ENCODE measurements at regions of chr19 and their contacts with region 1.

Region 1: GRCh38 chr19:35931161-35931873 is 4.9 kb upstream of the LRFN3 start:
- DNase-seq: peak; percentile 100
- H3K4me3 Mint-ChIP-seq: peak overlapping the region; percentile 62
- H3K27ac Mint-ChIP-seq: peak overlapping the region; percentile 91
- H3K4me1 Mint-ChIP-seq: peaks cover 40% of the 10 kb centered on the region
- H3K27me3 Mint-ChIP-seq: no peaks in the 10 kb centered on the region

Region 2: GRCh38 chr19:35710784-35711723 is 220.3 kb before region 1 on chr19:
- CTCF ChIA-PET with region 1: interaction called, 9 read pairs
- POLR2A ChIA-PET with region 1: interaction called, 13 read pairs
- DNase-seq: peak; percentile 72
- H3K4me3 Mint-ChIP-seq: peak overlapping the region; percentile 64
- H3K27ac Mint-ChIP-seq: peak overlapping the region; percentile 99
- H3K4me1 Mint-ChIP-seq: peaks cover 64% of the 10 kb centered on the region
- H3K27me3 Mint-ChIP-seq: no peaks in the 10 kb centered on the region

Region 3: GRCh38 chr19:35859414-35859813 is 71.9 kb before region 1 on chr19:
- CTCF ChIA-PET with region 1: no interaction called
- POLR2A ChIA-PET with region 1: no interaction called
- DNase-seq: no peak
- H3K4me3 Mint-ChIP-seq: no peak overlapping the region
- H3K27ac Mint-ChIP-seq: no peak overlapping the region
- H3K4me1 Mint-ChIP-seq: peaks cover 5% of the 10 kb centered on the region
- H3K27me3 Mint-ChIP-seq: peaks cover 63% of the 10 kb centered on the region

Region 4: DNA sequence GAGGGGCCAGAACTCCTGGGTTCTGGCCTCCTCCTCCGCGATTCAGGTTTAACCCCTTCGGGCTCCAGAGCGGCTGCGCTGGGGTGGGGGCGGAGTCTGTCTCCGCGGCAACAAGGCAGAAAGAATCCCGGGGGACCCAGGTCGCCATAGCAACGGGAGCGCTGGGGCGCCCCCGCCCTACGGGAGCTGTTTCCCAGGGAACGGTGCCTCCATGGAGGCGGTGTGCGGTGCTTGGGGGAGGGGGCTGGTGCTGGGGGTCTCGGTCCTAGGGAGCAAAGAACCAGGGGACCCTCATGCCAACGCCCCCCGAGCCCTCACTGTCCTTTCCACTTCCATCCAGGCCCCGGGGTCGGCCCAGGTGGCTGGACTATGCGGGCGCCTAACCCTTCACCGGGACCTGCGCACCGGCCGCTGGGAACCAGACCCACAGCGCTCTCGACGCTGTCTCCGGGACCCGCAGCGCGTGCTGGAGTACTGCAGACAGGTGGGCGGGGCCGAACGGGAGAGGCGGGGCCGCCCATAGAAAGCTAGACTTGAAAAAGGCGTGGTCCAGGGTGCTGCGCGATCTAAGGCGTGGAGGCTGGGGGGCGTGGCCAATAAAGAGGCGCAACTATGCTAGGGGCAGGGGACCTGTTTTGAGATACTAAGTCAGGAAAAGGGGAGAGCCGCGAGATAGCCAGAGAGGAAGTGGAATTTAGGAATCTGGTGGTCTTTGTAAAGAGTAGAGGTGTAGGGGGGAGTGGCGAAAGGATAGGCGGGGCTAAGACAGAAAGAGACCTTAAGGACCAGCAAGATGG is 61.8 kb before region 1 on chr19:
- CTCF ChIA-PET with region 1: interaction called, 7 read pairs
- POLR2A ChIA-PET with region 1: interaction called, 13 read pairs
- DNase-seq: peak; percentile 88
- H3K4me3 Mint-ChIP-seq: peak overlapping the region; percentile 73
- H3K27ac Mint-ChIP-seq: peak overlapping the region; percentile 43
- H3K4me1 Mint-ChIP-seq: peaks cover 18% of the 10 kb centered on the region
- H3K27me3 Mint-ChIP-seq: peaks cover 37% of the 10 kb centered on the region

Region 5: DNA sequence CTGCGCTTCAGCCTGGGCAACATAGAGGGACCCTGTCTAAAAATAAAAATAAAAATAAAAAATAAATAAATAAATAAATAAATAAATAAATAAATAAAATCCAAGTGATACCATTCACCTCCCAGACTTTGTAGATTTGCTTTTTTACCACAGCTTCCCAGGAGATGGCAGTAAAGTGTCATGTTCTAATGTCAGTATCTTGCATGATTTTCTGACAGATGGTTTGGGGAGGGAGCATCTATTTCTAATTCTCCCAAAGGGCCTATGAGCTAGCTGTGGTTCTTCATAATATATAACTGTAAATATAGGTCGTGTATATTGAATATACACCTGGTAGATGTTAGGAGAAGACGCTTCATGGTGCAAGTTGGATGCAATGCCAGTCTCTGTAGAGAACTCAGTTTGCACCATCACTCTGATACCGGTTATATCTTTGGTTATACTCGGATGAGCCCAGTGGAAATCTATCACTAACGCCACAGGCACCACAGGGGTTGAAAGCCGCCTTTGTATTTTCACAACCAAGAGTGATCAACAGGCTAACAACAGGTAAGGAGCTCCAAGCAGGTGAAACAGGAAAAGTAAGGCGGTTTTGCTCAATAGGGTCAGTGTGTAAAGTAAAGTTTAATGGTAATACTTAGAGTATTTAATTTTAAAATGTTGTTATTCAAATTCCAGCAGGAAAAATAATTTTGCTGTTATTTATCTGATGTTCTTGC is 49.0 kb before region 1 on chr19:
- CTCF ChIA-PET with region 1: interaction called, 120 read pairs
- POLR2A ChIA-PET with region 1: interaction called, 38 read pairs
- DNase-seq: peak; percentile 37
- H3K4me3 Mint-ChIP-seq: no peak overlapping the region
- H3K27ac Mint-ChIP-seq: no peak overlapping the region
- H3K4me1 Mint-ChIP-seq: peaks cover 12% of the 10 kb centered on the region
- H3K27me3 Mint-ChIP-seq: peaks cover 15% of the 10 kb centered on the region

Region 6: GRCh38 chr19:35899547-35900214 is 31.6 kb before region 1 on chr19:
- CTCF ChIA-PET with region 1: interaction called, 11 read pairs
- POLR2A ChIA-PET with region 1: interaction called, 49 read pairs
- DNase-seq: peak; percentile 90
- H3K4me3 Mint-ChIP-seq: peak overlapping the region; percentile 94
- H3K27ac Mint-ChIP-seq: peak overlapping the region; percentile 95
- H3K4me1 Mint-ChIP-seq: peaks cover 55% of the 10 kb centered on the region
- H3K27me3 Mint-ChIP-seq: no peaks in the 10 kb centered on the region

Region 7: DNA sequence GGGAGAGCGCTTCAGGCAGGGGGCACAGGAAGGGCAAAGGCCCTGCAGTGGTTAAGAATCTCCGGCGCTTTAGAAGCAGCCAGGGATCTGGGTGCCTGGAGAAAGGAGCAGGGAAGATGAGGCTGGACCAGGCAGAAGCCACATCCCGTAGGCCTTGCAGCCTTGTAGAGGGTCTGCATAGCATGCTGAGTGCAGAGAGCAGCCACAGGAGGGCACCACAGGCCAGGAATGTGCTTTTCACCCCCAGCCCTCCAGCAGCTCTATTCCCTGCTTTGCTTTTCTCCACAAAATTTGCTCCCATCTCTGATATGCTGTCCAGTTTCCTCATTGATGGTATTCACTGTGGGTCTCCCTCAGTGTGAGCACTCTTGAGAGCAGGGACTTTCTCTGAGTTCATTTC is 129.1 kb after region 1 on chr19:
- CTCF ChIA-PET with region 1: no interaction called
- POLR2A ChIA-PET with region 1: no interaction called
- DNase-seq: no peak
- H3K4me3 Mint-ChIP-seq: no peak overlapping the region
- H3K27ac Mint-ChIP-seq: no peak overlapping the region
- H3K4me1 Mint-ChIP-seq: peaks cover 31% of the 10 kb centered on the region
- H3K27me3 Mint-ChIP-seq: no peaks in the 10 kb centered on the region